ENCODE measurements at regions of chr18 and their contacts with region 1.

Region 1: DNA sequence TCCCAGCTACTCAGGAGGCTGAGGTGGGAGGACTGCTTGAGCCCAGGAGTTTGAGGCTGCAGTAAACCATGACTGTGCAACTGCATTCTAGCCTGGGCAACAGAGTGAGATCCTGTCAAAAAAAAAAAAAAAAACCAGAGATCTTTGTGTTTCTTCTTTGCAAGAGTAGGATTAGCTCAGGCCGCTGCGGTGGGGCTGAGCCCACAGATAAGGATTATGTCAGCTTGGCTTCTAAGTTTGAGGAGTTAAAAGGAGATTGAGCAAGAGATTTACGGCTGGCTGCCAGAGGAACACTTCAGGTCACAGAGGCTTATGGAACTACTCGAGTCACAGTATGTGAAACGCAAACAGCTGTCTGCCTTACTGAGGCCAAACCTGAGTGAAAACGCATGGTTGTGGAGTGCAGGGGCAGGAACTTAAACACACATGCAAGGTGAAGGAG is 146.7 kb upstream of the L3MBTL4 start:
- DNase-seq: peak; percentile 89 to 91
- H3K4me3 ChIP-seq: no peak overlapping the region
- H3K4me3 Mint-ChIP-seq: peak overlapping the region; percentile 56
- H3K27ac Mint-ChIP-seq: peak overlapping the region; percentile 79
- H3K4me1 ChIP-seq: peaks cover 71% of the 10 kb centered on the region
- H3K4me1 Mint-ChIP-seq: peaks cover 39% of the 10 kb centered on the region
- H3K27me3 ChIP-seq: no peaks in the 10 kb centered on the region
- H3K27me3 Mint-ChIP-seq: no peaks in the 10 kb centered on the region
- CTCF ChIP-seq: no peak

Region 2: DNA sequence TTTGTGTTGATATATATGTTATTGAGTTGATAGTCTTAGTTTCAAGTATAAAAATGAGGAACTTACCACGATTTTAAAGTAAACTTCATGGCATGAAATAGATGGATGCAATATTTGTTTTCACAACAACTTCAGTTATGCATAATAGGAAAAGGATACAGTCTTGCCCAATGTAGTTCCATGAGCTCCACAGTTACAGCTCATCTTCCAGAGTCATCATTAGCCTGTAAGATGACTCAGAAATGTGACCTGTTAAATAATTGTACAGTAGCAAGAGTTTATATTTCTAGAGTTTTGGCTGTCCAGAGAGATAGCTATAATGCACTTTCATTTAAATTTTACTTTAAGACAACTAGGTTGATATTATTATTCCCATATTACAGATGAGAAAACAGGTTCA is 87.1 kb after region 1 on chr18:
- CTCF ChIA-PET with region 1: no interaction called
- POLR2A ChIA-PET with region 1: no interaction called
- intact Hi-C with region 1: loop called (anchors 5 kb)
- DNase-seq: no peak
- H3K4me3 ChIP-seq: no peak overlapping the region
- H3K4me3 Mint-ChIP-seq: no peak overlapping the region
- H3K27ac Mint-ChIP-seq: no peak overlapping the region
- H3K4me1 ChIP-seq: peaks cover 22% of the 10 kb centered on the region
- H3K4me1 Mint-ChIP-seq: peaks cover 17% of the 10 kb centered on the region
- H3K27me3 ChIP-seq: no peaks in the 10 kb centered on the region
- H3K27me3 Mint-ChIP-seq: no peaks in the 10 kb centered on the region
- CTCF ChIP-seq: no peak

Region 3: GRCh38 chr18:6719914-6720692 is 158.7 kb after region 1 on chr18:
- CTCF ChIA-PET with region 1: interaction called, 5 read pairs
- POLR2A ChIA-PET with region 1: interaction called, 4 read pairs
- intact Hi-C with region 1: loop called (anchors 1 kb)
- DNase-seq: peak; percentile 56 to 57
- H3K4me3 ChIP-seq: no peak overlapping the region
- H3K4me3 Mint-ChIP-seq: peak overlapping the region; percentile 60
- H3K27ac Mint-ChIP-seq: peak overlapping the region; percentile 99
- H3K4me1 ChIP-seq: peaks cover 96% of the 10 kb centered on the region
- H3K4me1 Mint-ChIP-seq: peaks cover 65% of the 10 kb centered on the region
- H3K27me3 ChIP-seq: no peaks in the 10 kb centered on the region
- H3K27me3 Mint-ChIP-seq: no peaks in the 10 kb centered on the region
- CTCF ChIP-seq: no peak

Region 4: GRCh38 chr18:6982398-6982797 is 421.0 kb after region 1 on chr18:
- CTCF ChIA-PET with region 1: no interaction called
- POLR2A ChIA-PET with region 1: no interaction called
- intact Hi-C with region 1: no loop called
- DNase-seq: no peak
- H3K4me3 ChIP-seq: no peak overlapping the region
- H3K4me3 Mint-ChIP-seq: no peak overlapping the region
- H3K27ac Mint-ChIP-seq: no peak overlapping the region
- H3K4me1 ChIP-seq: peaks cover 6% of the 10 kb centered on the region; the same call in 1 of the 2 replicates
- H3K4me1 Mint-ChIP-seq: no peaks in the 10 kb centered on the region
- H3K27me3 ChIP-seq: no peaks in the 10 kb centered on the region
- H3K27me3 Mint-ChIP-seq: no peaks in the 10 kb centered on the region
- CTCF ChIP-seq: no peak

Region 5: GRCh38 chr18:7064326-7064725 is 502.9 kb after region 1 on chr18:
- CTCF ChIA-PET with region 1: no interaction called
- POLR2A ChIA-PET with region 1: no interaction called
- intact Hi-C with region 1: loop called (anchors 5 kb)
- DNase-seq: peak; percentile 58 to 72
- H3K4me3 ChIP-seq: no peak overlapping the region
- H3K4me3 Mint-ChIP-seq: peak overlapping the region; percentile 1
- H3K27ac Mint-ChIP-seq: peak overlapping the region; percentile 40
- H3K4me1 ChIP-seq: peaks cover 92% of the 10 kb centered on the region
- H3K4me1 Mint-ChIP-seq: peaks cover 55% of the 10 kb centered on the region
- H3K27me3 ChIP-seq: no peaks in the 10 kb centered on the region
- H3K27me3 Mint-ChIP-seq: no peaks in the 10 kb centered on the region
- CTCF ChIP-seq: no peak

Measured in Caco-2 (cell line).